A549 (cell line): ENCODE measurements at regions of chr1 and their contacts with region 1.

Region 1: GRCh38 chr1:145891587-145892485 is 6.2 kb upstream of the ANKRD35 start:
- DNase-seq: peak; percentile 98 to 99
- ATAC-seq: peak; percentile 97
- H3K4me3 ChIP-seq: no peak overlapping the region
- H3K27ac ChIP-seq: peak overlapping the region; percentile 88 to 91
- H3K4me1 ChIP-seq: peaks cover 41% of the 10 kb centered on the region
- CTCF ChIP-seq: peak; percentile 98
- EP300 ChIP-seq: no peak
- POLR2A ChIP-seq: no peak
- RAD21 ChIP-seq: peak; percentile 96 to 98

Region 2: DNA sequence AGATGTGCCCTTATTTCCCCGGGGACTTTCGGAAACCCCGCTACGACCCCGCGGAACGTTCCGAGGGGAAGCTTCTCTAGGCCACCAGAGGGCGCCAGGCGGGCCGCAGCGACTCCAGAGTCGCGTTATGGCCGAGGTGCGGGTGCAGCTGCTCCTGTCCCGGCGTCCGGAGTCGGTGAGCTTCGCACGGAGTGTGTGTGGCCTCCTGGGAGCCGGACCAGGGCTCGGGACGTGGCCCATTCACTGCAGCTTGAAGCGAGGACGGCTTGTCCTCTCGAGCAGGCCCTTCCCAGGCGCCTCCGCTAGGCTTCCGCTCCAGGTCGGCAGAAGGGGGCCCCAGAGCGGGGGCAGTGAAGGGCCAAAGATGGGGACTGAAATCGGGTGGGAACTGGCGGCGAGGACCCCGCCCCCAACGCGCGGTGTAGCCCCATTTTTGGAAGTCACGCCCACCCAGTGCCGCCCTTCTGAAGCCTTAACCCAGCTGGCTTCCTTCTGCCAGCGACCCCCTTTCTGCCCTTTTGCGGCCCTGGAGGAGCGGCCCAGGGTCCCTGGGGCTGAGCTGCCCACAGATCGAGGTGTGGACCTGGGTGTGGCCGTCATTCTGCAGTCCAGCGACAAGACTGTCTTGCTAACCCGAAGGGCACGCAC is 46.2 kb before region 1 on chr1 and contains the start of gene NUDT17:
- CTCF ChIA-PET with region 1: interaction called, 53 read pairs
- POLR2A ChIA-PET with region 1: interaction called, 4 read pairs
- DNase-seq: peak; percentile 79 to 93
- ATAC-seq: peak; percentile 82 to 89
- H3K4me3 ChIP-seq: peak within 1 kb of the TSS; percentile 55
- H3K27ac ChIP-seq: peak within 1 kb of the TSS; percentile 82 to 95
- H3K4me1 ChIP-seq: peaks cover 4% of the 10 kb centered on the region; the same call in 1 of the 3 replicates
- CTCF ChIP-seq: peak; percentile 92
- EP300 ChIP-seq: no peak
- POLR2A ChIP-seq: peak; percentile 51
- RAD21 ChIP-seq: peak; percentile 57 to 66
- polyA plus RNA-seq, gene NUDT17: 6.7 and 9.0 TPM in 2 replicates

Region 3: DNA sequence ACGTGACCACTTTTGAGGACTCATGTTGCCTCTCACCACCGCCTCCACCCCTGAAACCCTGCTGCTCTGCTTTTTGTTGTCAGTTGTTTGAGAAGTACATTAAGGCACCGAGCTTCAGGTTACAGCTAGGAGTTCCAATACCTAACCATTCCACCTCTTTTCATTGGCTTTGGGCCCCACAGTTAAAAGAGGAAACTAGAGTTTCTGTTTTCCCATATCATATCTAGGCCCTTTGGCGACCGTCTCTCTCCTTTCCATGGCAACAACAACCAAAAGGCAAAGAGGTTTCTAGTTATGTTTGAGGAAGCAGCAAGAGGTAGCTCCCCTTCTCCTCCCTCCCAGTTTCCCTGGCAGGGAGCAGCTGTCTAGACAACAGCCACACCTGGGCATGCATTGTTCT is 12.1 kb before region 1 on chr1:
- CTCF ChIA-PET with region 1: interaction called, 78 read pairs
- POLR2A ChIA-PET with region 1: no interaction called
- DNase-seq: no peak
- ATAC-seq: no peak
- H3K4me3 ChIP-seq: no peak overlapping the region
- H3K27ac ChIP-seq: no peak overlapping the region
- H3K4me1 ChIP-seq: peaks cover 10% of the 10 kb centered on the region; the same call in 1 of the 3 replicates
- CTCF ChIP-seq: no peak
- EP300 ChIP-seq: no peak
- POLR2A ChIP-seq: no peak
- RAD21 ChIP-seq: no peak

Region 4: GRCh38 chr1:145927063-145927886 is 35.4 kb after region 1 on chr1 and contains the start of gene RBM8A:
- CTCF ChIA-PET with region 1: interaction called, 41 read pairs
- POLR2A ChIA-PET with region 1: interaction called, 28 read pairs
- DNase-seq: peak; percentile 86 to 99
- ATAC-seq: peak; percentile 98
- H3K4me3 ChIP-seq: peak within 1 kb of the TSS; percentile 84
- H3K27ac ChIP-seq: peak within 1 kb of the TSS; percentile 97
- H3K4me1 ChIP-seq: peaks cover 10% of the 10 kb centered on the region; the same call in 2 of the 3 replicates
- CTCF ChIP-seq: peak; percentile 60
- EP300 ChIP-seq: no peak
- POLR2A ChIP-seq: peak; percentile 92
- RAD21 ChIP-seq: peak; percentile 15 to 20; a peak in 1 of 5 replicates
- polyA plus RNA-seq, gene RBM8A: 152 and 281 TPM in 2 replicates

Region 5: DNA sequence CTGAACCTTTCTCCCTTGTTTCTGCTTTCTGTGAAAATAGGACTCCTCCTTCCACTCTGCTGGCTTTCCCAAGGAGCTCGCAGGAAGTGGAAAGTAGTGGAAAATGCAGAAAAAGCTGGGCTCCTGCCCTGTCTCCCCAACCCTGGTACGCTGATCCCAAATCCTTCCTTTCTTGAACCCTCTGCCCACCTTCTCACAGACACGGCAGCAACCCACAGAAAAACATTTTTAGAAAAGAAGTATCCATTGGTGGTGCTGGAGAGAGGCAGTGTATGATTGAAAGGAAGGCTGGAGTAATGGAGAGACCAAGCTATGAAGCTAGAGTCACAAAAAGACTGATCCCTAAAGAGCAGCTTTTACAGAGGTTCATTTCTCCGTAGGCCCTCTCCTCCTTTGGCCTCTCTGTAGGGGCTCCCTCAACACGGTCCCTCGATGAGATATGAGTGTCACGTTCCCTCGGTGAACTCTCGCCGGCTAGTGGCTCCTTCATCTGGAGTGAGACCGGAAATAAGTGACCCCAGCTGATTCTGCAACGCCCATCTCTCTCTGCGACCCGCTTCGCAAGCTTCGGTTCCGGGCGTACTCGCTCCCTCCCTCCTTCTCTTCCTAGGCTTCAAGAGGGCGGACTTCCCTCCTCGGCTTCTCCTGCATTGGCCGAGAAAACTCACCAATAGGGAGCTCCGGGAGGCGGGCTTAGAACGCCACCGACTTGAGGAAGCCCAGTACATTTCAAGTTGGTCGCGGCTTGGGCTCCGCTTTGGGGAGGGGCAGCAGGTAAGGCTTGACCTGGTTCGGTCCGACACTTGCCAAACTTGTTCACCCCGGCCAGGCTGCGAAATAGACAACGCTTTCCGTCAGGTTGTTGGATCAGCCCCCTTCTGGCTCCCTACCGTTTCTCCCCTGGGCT is 72.4 kb after region 1 on chr1 and contains the starts of genes ANKRD34A and POLR3GL:
- CTCF ChIA-PET with region 1: interaction called, 10 read pairs
- POLR2A ChIA-PET with region 1: interaction called, 8 read pairs
- DNase-seq: peak; percentile 93 to 95
- ATAC-seq: peak; percentile 84 to 92
- H3K4me3 ChIP-seq: peak within 1 kb of the TSS; percentile 55
- H3K27ac ChIP-seq: peak within 1 kb of the TSS; percentile 78 to 87
- H3K4me1 ChIP-seq: peaks cover 39% of the 10 kb centered on the region
- CTCF ChIP-seq: no peak
- EP300 ChIP-seq: no peak
- POLR2A ChIP-seq: peak; percentile 79
- RAD21 ChIP-seq: no peak
- polyA plus RNA-seq, gene ANKRD34A: 0.30 and 0.34 TPM in 2 replicates
- polyA plus RNA-seq, gene POLR3GL: 11.0 and 15.7 TPM in 2 replicates

Region 6: GRCh38 chr1:146036965-146037646 is 145.3 kb after region 1 on chr1:
- CTCF ChIA-PET with region 1: interaction called, 14 read pairs
- POLR2A ChIA-PET with region 1: no interaction called
- DNase-seq: peak; percentile 64 to 89
- ATAC-seq: peak; percentile 55 to 66
- H3K4me3 ChIP-seq: peak overlapping the region; percentile 62
- H3K27ac ChIP-seq: peak overlapping the region; percentile 91 to 95
- H3K4me1 ChIP-seq: peaks cover 6% of the 10 kb centered on the region; the same call in 2 of the 3 replicates
- CTCF ChIP-seq: no peak
- EP300 ChIP-seq: no peak
- POLR2A ChIP-seq: no peak
- RAD21 ChIP-seq: no peak